ENCODE measurements at regions of chr4 and their contacts with region 1.

Region 1: DNA sequence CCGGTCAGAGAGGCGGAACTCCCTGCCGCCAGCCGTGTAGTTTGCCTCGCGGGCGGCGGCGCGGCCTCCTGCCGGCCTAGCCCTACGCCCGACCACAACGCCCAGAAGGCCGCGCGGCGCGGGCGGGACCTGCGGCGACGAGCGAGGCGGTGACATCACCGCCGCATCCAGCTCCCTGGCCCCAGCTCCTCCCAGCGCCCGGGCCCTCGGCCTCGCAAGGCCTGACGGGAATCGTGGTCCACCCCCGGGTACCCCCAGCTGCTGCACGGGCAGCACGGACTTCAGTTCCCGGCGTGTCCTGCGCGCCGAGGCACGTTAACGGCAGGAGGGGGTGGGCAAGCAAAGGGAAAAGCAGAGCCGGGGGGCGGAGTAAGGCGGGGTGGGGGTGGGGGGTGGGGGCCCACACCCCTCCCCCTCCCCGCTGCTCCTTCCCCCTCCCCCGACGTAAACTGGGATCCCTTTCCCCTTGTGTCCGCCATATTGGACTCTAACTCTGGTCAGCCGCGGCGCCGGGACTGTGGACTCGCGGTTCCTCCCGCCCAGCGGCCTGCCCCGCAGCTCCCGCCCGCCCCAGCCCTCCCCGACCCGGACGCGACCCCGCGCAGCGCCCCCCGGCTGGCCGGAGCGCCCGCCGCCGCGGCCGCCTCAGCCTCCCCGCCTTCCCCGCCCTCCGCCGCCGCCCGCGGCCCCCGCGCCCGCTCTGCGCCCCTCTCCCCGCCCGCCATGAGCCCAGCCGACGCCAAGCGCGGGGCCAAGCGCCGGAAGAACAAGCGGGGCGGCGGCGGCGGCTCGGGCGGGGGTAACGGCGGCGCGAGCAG is at the start of gene FAM193A:
- DNase-seq: peak; percentile 98 to 100
- H3K4me3 ChIP-seq: peak within 1 kb of the TSS; percentile 90 to 99
- H3K27ac ChIP-seq: peak within 1 kb of the TSS; percentile 92 to 97
- H3K4me1 ChIP-seq: peaks cover 0 to 31% (median 24%) of the 10 kb centered on the region in 4 donors
- H3K27me3 ChIP-seq: no peaks in the 10 kb centered on the region
- CTCF ChIP-seq: peak; percentile 7 to 9

Region 2: GRCh38 chr4:2418650-2419571 is 117.5 kb before region 1 on chr4 and contains the start of gene CFAP99:
- intact Hi-C with region 1: loop called (anchors 10 kb)
- DNase-seq: peak; percentile 96 to 97
- H3K4me3 ChIP-seq: peak within 1 kb of the TSS; percentile 56 to 67
- H3K27ac ChIP-seq: peak within 1 kb of the TSS in 1 of 2 donors; percentile 34
- H3K4me1 ChIP-seq: peaks cover 0 to 34% (median 30%) of the 10 kb centered on the region in 4 donors
- H3K27me3 ChIP-seq: peaks cover 0 to 43% of the 10 kb centered on the region in 2 donors
- CTCF ChIP-seq: no peak

Region 3: DNA sequence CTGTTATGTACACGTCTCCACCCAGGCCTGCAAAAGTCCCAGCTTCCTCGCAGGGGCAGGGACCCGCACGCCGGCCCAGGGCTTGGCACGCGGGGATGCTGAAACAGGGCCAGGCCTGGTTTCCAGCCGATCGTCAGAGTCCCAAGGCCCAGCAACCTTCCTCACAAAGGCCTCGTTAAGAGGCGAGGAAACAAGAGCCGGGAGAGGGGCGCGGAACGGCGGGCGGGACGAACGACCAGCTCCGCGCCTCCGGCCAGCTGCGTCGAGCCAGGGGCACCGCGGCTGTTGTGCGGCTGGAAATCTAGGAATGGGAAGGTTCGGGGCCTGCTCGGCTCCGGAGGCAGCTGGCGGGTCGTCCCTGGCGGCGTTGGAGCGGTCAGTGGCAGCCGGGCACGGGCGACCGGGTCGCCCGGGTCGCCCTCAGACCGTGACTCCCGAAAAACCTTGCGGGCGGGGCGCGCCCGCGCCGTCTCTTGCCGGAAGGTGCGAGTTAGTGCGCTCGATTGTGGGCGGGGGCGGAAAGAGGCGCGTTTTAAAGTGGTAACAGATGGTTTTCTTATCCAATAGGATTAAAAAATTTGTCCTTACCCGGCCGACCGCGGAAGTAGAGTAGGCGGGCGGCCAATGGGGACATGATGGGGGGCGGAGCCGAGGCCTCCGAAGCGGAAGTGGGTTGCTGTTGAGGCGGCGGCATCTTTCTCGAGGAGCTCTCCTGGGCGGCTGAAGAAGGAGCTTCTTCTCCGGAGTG is 67.8 kb before region 1 on chr4 and contains the start of gene RNF4:
- intact Hi-C with region 1: loop called (anchors 1 kb)
- DNase-seq: peak; percentile 97 to 98
- H3K4me3 ChIP-seq: peak within 1 kb of the TSS; percentile 97
- H3K27ac ChIP-seq: peak within 1 kb of the TSS; percentile 91 to 95
- H3K4me1 ChIP-seq: peaks cover 0 to 29% (median 26%) of the 10 kb centered on the region in 4 donors
- H3K27me3 ChIP-seq: no peaks in the 10 kb centered on the region
- CTCF ChIP-seq: no peak

Region 4: DNA sequence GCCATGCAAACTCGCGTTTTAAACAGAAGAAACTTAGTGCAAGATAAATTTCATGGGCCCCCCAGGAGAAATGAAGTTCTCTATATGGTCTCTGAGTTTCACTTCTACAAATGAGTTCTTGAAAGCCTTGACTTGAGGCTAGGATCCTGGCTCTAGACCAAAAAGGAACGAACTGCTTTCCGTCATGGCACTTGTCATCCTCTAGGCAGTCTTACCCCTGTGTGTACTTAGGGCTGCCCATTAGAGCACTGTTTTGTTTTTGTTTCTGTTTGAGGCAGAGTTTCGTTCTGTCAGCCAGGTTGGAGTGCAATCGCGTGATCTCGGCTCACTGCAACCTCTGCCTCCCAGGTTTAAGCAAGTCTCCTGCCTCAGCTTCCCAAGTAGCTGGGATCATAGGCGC is 38.5 kb before region 1 on chr4:
- intact Hi-C with region 1: no loop called
- DNase-seq: peak in 1 of 2 donors; percentile 37
- H3K4me3 ChIP-seq: no peak overlapping the region
- H3K27ac ChIP-seq: no peak overlapping the region
- H3K4me1 ChIP-seq: peaks cover 0 to 29% (median 8%) of the 10 kb centered on the region in 4 donors
- H3K27me3 ChIP-seq: no peaks in the 10 kb centered on the region
- CTCF ChIP-seq: no peak

Region 5: GRCh38 chr4:2624782-2625530 is 88.6 kb after region 1 on chr4:
- intact Hi-C with region 1: loop called (anchors 10 kb)
- DNase-seq: peak in 1 of 2 donors; percentile 53
- H3K4me3 ChIP-seq: no peak overlapping the region
- H3K27ac ChIP-seq: no peak overlapping the region
- H3K4me1 ChIP-seq: peaks cover 0 to 47% (median 11%) of the 10 kb centered on the region in 4 donors
- H3K27me3 ChIP-seq: no peaks in the 10 kb centered on the region
- CTCF ChIP-seq: no peak